Breast epithelium (tissue), 4 donors: ENCODE measurements at regions of chr18 and their contacts with region 1.

Region 1: GRCh38 chr18:5772306-5773105 is 122.8 kb downstream of the TMEM200C start:
- DNase-seq: no peak
- H3K4me3 ChIP-seq: peak overlapping the region in 1 of 3 donors; percentile 28
- H3K27ac ChIP-seq: peak overlapping the region in 1 of 2 donors; percentile 38
- H3K4me1 ChIP-seq: no peaks in the 10 kb centered on the region
- H3K27me3 ChIP-seq: peaks cover 0 to 8% of the 10 kb centered on the region in 2 donors
- CTCF ChIP-seq: no peak
- POLR2A ChIP-seq: no peak

Region 2: GRCh38 chr18:4035521-4035920 is 1737.0 kb before region 1 on chr18:
- intact Hi-C with region 1: loop called (anchors 10 kb)
- DNase-seq: no peak
- H3K4me3 ChIP-seq: no peak overlapping the region
- H3K27ac ChIP-seq: no peak overlapping the region
- H3K4me1 ChIP-seq: no peaks in the 10 kb centered on the region
- H3K27me3 ChIP-seq: no peaks in the 10 kb centered on the region
- CTCF ChIP-seq: no peak
- POLR2A ChIP-seq: no peak

Region 3: GRCh38 chr18:5759194-5759593 is 13.3 kb before region 1 on chr18:
- intact Hi-C with region 1: no loop called
- DNase-seq: no peak
- H3K4me3 ChIP-seq: peak overlapping the region in 2 of 3 donors; percentile 24 to 48
- H3K27ac ChIP-seq: no peak overlapping the region
- H3K4me1 ChIP-seq: no peaks in the 10 kb centered on the region
- H3K27me3 ChIP-seq: peaks cover 0 to 10% of the 10 kb centered on the region in 2 donors
- CTCF ChIP-seq: no peak
- POLR2A ChIP-seq: no peak